CD8-positive, alpha-beta T cell (primary cell): ENCODE measurements at regions of chr4 and their contacts with region 1.

Region 1: DNA sequence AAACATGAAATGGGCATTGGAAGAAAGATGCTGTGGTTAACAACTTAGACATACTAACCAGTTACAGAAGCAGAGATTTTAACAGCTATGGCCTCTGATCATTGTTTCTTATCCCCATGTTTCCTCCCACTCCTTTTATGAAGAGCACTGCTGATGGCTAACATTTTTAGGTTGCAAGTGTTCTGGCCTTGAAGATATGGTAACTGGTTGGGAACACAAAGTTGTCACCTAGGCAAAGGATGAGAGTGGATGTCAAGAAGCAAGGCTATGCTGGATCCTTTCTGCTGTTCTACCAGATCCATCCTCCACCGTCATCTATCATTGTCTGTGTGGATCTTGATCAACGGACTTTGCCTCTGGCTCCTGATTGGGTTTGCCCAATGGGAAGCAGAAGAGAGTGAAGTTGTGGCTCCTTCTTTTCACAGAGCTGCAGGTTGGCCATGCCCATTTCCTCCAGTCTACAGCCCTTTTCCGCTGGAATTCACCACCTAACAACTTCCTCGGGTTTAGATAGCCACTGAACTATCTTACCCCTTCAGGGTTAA is 48.9 kb upstream of the SPP1 start:
- DNase-seq: no peak
- ATAC-seq: no peak
- H3K4me3 ChIP-seq: no peak overlapping the region
- H3K4me3 Mint-ChIP-seq: no peak overlapping the region
- H3K27ac ChIP-seq: no peak overlapping the region
- H3K27ac Mint-ChIP-seq: no peak overlapping the region
- H3K4me1 ChIP-seq: no peaks in the 10 kb centered on the region
- H3K4me1 Mint-ChIP-seq: no peaks in the 10 kb centered on the region
- H3K27me3 ChIP-seq: no peaks in the 10 kb centered on the region
- H3K27me3 Mint-ChIP-seq: peaks cover 8% of the 10 kb centered on the region
- CTCF ChIP-seq: no peak

Region 2: GRCh38 chr4:87938746-87939145 is 12.1 kb after region 1 on chr4:
- CTCF ChIA-PET with region 1: no interaction called
- POLR2A ChIA-PET with region 1: no interaction called
- intact Hi-C with region 1: loop called in 1 of 2 experiments (anchors 1 kb)
- DNase-seq: no peak
- ATAC-seq: no peak
- H3K4me3 ChIP-seq: no peak overlapping the region
- H3K4me3 Mint-ChIP-seq: no peak overlapping the region
- H3K27ac ChIP-seq: no peak overlapping the region
- H3K27ac Mint-ChIP-seq: no peak overlapping the region
- H3K4me1 ChIP-seq: no peaks in the 10 kb centered on the region
- H3K4me1 Mint-ChIP-seq: no peaks in the 10 kb centered on the region
- H3K27me3 ChIP-seq: no peaks in the 10 kb centered on the region
- H3K27me3 Mint-ChIP-seq: peaks cover 6% of the 10 kb centered on the region
- CTCF ChIP-seq: no peak